AG04450 (cell line): ENCODE measurements at regions of chr17 and their contacts with region 1.

Region 1: DNA sequence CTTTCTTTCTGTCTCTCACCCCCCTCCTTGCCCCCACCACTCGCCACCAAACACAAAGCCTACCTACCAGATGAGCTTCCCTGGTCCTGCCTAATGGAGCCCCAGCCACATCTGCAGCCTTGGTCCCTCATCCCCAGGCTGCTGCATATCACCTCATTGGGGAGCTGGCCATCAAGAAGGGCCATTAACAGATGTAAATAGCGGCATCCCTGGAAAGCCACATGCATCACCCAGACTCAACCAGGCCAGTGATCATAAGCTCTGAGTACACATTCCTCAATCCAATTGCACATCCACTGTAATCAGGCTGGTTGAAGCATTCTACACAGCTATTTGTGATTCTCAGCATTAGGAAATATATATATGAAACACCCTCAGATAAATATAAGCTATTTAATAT is 211.7 kb upstream of the C17orf78 start:
- DNase-seq: no peak
- H3K4me3 ChIP-seq: no peak overlapping the region
- H3K27ac ChIP-seq: no peak overlapping the region
- H3K27me3 ChIP-seq: no peaks in the 10 kb centered on the region
- CTCF ChIP-seq: no peak

Region 2: DNA sequence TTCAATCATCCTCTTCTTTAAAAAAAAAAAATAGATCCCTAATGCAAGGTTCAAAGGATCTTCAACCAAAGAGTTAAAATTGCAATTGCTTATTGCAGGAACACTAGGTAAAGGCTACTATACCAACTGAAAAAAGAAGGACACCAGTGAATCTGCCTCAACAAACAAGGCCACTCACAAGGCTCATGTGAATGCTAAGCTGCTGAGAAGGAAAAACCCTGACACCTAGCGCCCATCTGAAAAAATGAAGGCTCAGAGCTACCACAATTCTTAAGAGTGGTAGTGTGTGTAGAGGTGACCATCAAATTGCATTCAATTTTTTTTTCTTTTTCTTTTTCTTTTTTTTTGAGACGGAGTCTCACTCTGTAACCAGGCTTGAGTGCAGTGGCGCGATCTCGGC is 10.1 kb after region 1 on chr17:
- CTCF ChIA-PET with region 1: interaction called, 14 read pairs
- POLR2A ChIA-PET with region 1: no interaction called
- DNase-seq: peak; percentile 10
- H3K4me3 ChIP-seq: no peak overlapping the region
- H3K27ac ChIP-seq: no peak overlapping the region
- H3K27me3 ChIP-seq: no peaks in the 10 kb centered on the region
- CTCF ChIP-seq: peak; percentile 55

Region 3: GRCh38 chr17:37273409-37274051 is 109.5 kb after region 1 on chr17:
- CTCF ChIA-PET with region 1: no interaction called
- POLR2A ChIA-PET with region 1: no interaction called
- DNase-seq: peak; percentile 80
- H3K4me3 ChIP-seq: no peak overlapping the region; the same call in 1 of the 2 replicates
- H3K27ac ChIP-seq: peak overlapping the region; percentile 66
- H3K27me3 ChIP-seq: no peaks in the 10 kb centered on the region
- CTCF ChIP-seq: no peak